WTC11 (cell line): ENCODE measurements at regions of chr2 and their contacts with region 1.

Region 1: DNA sequence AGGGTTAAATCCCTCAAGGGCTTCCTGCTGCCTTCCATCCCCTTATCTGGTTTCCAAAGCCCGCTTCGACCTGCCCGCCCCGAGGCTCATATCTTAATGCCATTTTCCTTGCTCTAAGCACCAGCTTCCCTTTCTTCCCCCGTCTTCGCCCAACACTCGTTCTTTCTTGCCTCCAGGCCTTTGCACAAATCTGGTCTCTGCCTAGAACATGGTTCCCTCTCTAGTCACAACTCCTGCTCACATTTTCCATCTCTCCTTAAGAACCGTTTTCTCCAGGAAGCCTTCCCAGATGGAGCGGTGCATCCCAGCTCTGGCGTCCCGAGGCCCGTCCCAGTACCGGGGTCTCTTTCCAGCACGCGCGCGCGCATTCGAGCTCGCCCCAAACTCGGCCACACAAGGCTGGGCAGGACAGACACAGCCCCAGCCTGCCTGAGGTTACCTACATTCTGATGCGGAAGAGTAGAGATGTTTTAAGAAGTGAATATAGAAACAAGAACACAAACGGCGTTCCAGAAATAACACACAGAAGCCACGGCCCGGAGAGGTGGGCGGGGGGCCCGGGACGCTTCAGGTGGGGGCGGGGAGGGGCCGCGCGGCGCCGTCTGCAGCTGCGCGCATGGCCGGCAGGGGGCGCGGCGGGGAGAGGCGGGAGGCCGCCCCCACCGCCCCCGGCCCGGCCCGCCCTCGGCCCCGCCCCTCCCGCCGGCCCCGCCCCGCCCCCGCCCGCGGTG is at the start of gene DGKD:
- DNase-seq: peak; percentile 65
- ATAC-seq: peak; percentile 79
- H3K4me3 Mint-ChIP-seq: peak within 1 kb of the TSS; percentile 94
- H3K27ac Mint-ChIP-seq: peak within 1 kb of the TSS; percentile 35
- H3K4me1 Mint-ChIP-seq: peaks cover 27% of the 10 kb centered on the region
- H3K27me3 Mint-ChIP-seq: peaks cover 36% of the 10 kb centered on the region
- CTCF ChIP-seq: no peak; the same call in 1 of the 2 replicates
- total RNA-seq, gene DGKD: 30.6 to 41.4 TPM (median 31.9 TPM) in 3 replicates

Region 2: GRCh38 chr2:233317196-233317943 is 36.6 kb before region 1 on chr2:
- CTCF ChIA-PET with region 1: interaction called, 11 read pairs
- POLR2A ChIA-PET with region 1: no interaction called
- DNase-seq: no peak
- ATAC-seq: no peak
- H3K4me3 Mint-ChIP-seq: no peak overlapping the region
- H3K27ac Mint-ChIP-seq: no peak overlapping the region
- H3K4me1 Mint-ChIP-seq: no peaks in the 10 kb centered on the region
- H3K27me3 Mint-ChIP-seq: no peaks in the 10 kb centered on the region
- CTCF ChIP-seq: no peak

Region 3: DNA sequence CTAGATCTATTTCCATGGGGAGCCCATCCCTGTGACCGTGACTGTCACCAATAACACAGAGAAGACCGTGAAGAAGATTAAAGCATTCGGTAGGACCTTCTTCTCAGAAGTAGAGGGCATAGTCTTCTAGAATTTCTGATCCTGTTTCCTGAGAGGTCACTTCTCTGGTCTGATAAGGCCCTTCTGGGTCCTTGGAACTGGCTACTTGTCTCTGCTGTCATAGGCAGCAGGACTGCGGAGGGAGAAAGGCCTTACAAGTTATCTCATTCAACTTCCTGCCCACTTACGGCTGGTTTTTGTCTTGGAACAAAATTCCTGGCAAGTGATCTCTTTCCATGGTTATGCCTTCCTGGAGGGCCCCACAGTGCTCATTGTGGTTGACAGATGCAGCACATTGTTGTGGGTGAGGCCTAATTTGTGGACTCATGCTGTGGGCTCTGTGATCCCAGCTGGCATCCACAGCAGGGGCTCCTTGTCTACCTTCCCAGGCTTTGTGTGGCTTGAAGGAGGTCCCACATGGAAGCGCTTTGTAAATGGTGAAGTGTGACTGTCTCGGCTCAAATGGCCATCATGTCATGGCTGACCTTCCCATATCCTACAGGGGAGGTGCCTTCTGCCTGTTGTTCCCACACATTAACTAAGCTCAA is 24.3 kb before region 1 on chr2:
- CTCF ChIA-PET with region 1: interaction called, 13 read pairs
- POLR2A ChIA-PET with region 1: no interaction called
- DNase-seq: no peak
- ATAC-seq: peak; percentile 73
- H3K4me3 Mint-ChIP-seq: no peak overlapping the region
- H3K27ac Mint-ChIP-seq: no peak overlapping the region
- H3K4me1 Mint-ChIP-seq: peaks cover 13% of the 10 kb centered on the region
- H3K27me3 Mint-ChIP-seq: peaks cover 60% of the 10 kb centered on the region
- CTCF ChIP-seq: no peak

Region 4: DNA sequence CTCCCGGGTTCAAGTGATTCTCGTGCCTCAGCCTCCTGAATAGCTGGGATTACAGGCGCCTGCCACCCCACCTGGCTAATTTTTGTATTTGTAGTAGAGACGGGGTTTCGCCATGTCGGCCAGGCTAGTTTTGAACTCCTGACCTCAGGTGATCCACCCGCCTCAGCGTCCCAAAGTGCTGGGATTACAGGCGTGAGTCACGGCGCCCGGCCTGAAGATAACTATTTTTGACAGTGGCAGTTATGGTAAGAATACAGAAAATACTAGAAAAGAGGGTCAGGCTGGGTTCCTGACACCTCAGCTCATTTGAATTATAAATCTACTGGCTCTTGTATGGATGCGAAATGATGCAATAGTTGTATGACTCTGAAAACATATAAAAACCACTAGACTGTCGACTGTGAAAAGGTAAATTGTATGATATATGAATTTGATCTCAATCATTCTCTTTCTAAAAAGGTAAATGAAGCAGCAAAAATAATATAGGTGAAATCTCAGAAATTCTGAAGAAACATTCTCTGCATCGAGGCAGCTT is 10.7 kb before region 1 on chr2:
- CTCF ChIA-PET with region 1: interaction called, 34 read pairs
- POLR2A ChIA-PET with region 1: no interaction called
- DNase-seq: no peak
- ATAC-seq: no peak
- H3K4me3 Mint-ChIP-seq: no peak overlapping the region
- H3K27ac Mint-ChIP-seq: no peak overlapping the region
- H3K4me1 Mint-ChIP-seq: no peaks in the 10 kb centered on the region
- H3K27me3 Mint-ChIP-seq: no peaks in the 10 kb centered on the region; the same call in 1 of the 2 replicates
- CTCF ChIP-seq: no peak

Region 5: DNA sequence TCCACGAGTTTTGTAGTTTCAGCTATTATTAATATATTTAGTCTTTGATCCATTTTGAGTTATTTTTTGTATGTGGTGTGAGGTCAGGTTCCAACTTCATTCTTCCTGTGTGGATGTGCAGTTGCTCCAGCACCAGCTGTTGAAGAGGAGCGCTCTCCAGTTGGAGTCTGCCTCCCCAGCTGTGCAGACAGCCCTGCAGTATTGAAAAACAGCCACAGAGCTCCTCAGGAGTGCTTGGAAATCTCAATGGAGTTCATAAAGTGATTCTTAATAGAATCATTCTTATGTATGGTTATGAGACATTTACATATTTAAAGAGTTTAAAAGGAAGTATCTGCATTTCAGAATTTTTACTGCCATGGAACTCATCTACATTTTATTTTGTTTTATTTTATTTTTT is 17.7 kb after region 1 on chr2:
- CTCF ChIA-PET with region 1: interaction called, 10 read pairs
- POLR2A ChIA-PET with region 1: no interaction called
- DNase-seq: no peak
- ATAC-seq: no peak
- H3K4me3 Mint-ChIP-seq: no peak overlapping the region
- H3K27ac Mint-ChIP-seq: 0 out of 2 replicates have a peak overlapping the region, but pooled peaks have one; percentile 88
- H3K4me1 Mint-ChIP-seq: peaks cover 23% of the 10 kb centered on the region
- H3K27me3 Mint-ChIP-seq: no peaks in the 10 kb centered on the region; the same call in 1 of the 2 replicates
- CTCF ChIP-seq: no peak

Region 6: DNA sequence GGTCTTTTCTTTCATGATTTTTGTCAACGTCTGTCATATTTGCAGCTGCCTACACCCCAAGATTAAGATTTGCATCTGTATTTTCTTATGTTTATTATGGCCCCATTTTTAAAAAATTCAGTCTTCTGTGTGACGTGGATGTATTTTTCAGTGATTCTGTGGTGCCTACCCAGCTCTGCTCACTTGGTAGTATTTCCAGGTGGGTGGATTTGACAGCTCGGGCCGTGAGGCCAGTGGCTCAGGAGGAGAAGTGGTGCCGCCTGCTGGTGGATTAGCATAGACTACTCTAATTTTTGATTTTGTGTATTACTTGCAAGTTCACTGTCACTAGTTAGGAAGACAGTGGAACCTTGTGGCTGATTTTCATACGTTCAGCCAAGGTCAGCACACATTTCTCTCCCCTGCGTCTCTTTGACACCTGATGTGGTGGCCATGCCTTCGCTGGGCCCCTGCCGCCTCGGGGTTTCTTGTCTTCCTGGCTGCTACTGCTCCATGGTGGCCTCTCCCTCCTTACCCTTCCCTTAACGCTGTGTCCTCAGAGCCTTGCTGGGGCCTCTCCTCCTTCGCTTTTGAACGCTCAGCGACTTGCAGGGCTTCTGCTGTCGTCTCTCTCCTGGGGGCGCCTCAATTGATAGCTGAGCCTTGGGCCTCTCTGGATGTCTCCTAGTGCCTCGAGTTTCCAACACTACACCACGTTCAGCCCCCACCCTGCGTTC is 89.7 kb after region 1 on chr2:
- CTCF ChIA-PET with region 1: interaction called, 25 read pairs
- POLR2A ChIA-PET with region 1: no interaction called
- DNase-seq: peak; percentile 80
- ATAC-seq: peak; percentile 66
- H3K4me3 Mint-ChIP-seq: no peak overlapping the region
- H3K27ac Mint-ChIP-seq: no peak overlapping the region
- H3K4me1 Mint-ChIP-seq: peaks cover 4% of the 10 kb centered on the region
- H3K27me3 Mint-ChIP-seq: no peaks in the 10 kb centered on the region
- CTCF ChIP-seq: peak; percentile 71